ENCODE measurements at regions of chr19 and their contacts with region 1.

Region 1: GRCh38 chr19:11587302-11587974 is 9.8 kb upstream of the ZNF627 start:
- DNase-seq: peak; percentile 47
- ATAC-seq: peak; percentile 90
- H3K4me3 ChIP-seq: peak overlapping the region; percentile 37 to 66 (median 41); a peak in 5 of 6 replicates
- H3K27ac ChIP-seq: no peak overlapping the region
- H3K4me1 ChIP-seq: 0 out of 2 replicates have a peak, but pooled peaks cover 10% of the 10 kb centered on the region
- H3K27me3 ChIP-seq: no peaks in the 10 kb centered on the region
- CTCF ChIP-seq: peak; percentile 86
- EP300 ChIP-seq: no peak
- POLR2A ChIP-seq: no peak
- RAD21 ChIP-seq: peak; percentile 80

Region 2: GRCh38 chr19:11496391-11497163 is 90.9 kb before region 1 on chr19:
- CTCF ChIA-PET with region 1: interaction called, 4 read pairs
- POLR2A ChIA-PET with region 1: no interaction called
- in situ Hi-C with region 1: no loop called
- intact Hi-C with region 1: loop called (anchors 5 kb)
- DNase-seq: peak; percentile 62
- ATAC-seq: peak; percentile 83
- H3K4me3 ChIP-seq: no peak overlapping the region
- H3K27ac ChIP-seq: no peak overlapping the region
- H3K4me1 ChIP-seq: peaks cover 1% of the 10 kb centered on the region
- H3K27me3 ChIP-seq: no peaks in the 10 kb centered on the region; a peak in 1 of 5 replicates
- CTCF ChIP-seq: peak; percentile 65
- EP300 ChIP-seq: no peak
- POLR2A ChIP-seq: no peak
- RAD21 ChIP-seq: 0 out of 2 replicates have a peak, but pooled peaks have one; percentile 30

Region 3: GRCh38 chr19:11535792-11536595 is 51.4 kb before region 1 on chr19:
- CTCF ChIA-PET with region 1: interaction called, 6 read pairs
- POLR2A ChIA-PET with region 1: no interaction called
- in situ Hi-C with region 1: no loop called
- intact Hi-C with region 1: loop called (anchors 2 kb)
- DNase-seq: peak; percentile 68
- ATAC-seq: peak; percentile 72
- H3K4me3 ChIP-seq: peak overlapping the region; percentile 18 to 69 (median 47); a peak in 5 of 6 replicates
- H3K27ac ChIP-seq: no peak overlapping the region
- H3K4me1 ChIP-seq: peaks cover 29% of the 10 kb centered on the region
- H3K27me3 ChIP-seq: peaks cover 0 to 4% of the 10 kb centered on the region in 2 experiments; a peak in 1 of 5 replicates
- CTCF ChIP-seq: peak; percentile 85
- EP300 ChIP-seq: 0 out of 4 replicates have a peak, but pooled peaks of 1 of the 2 experiments have one; percentile 24
- POLR2A ChIP-seq: no peak
- RAD21 ChIP-seq: peak; percentile 80

Region 4: GRCh38 chr19:11558881-11559828 is 28.3 kb before region 1 on chr19 and contains the start of gene ELOF1:
- CTCF ChIA-PET with region 1: interaction called, 13 read pairs
- POLR2A ChIA-PET with region 1: no interaction called
- in situ Hi-C with region 1: no loop called
- intact Hi-C with region 1: loop called (anchors 1 kb)
- DNase-seq: peak; percentile 96
- ATAC-seq: peak; percentile 98
- H3K4me3 ChIP-seq: peak within 1 kb of the TSS; percentile 70 to 92 (median 82)
- H3K27ac ChIP-seq: peak within 1 kb of the TSS; percentile 74
- H3K4me1 ChIP-seq: peaks cover 31% of the 10 kb centered on the region
- H3K27me3 ChIP-seq: no peaks in the 10 kb centered on the region
- CTCF ChIP-seq: peak; percentile 19; the same call in 1 of the 2 replicates
- EP300 ChIP-seq: no peak
- POLR2A ChIP-seq: peak; percentile 85 to 98
- RAD21 ChIP-seq: peak; percentile 41; the same call in 1 of the 2 replicates
- total RNA-seq, gene ELOF1: 43.2 and 47.2 TPM in 2 replicates